ENCODE measurements at regions of chr17 and their contacts with region 1.

Region 1: GRCh38 chr17:1648963-1649843 is 463 bp downstream of the RILP start:
- DNase-seq: peak; percentile 96
- H3K4me3 ChIP-seq: peak overlapping the region; percentile 62 to 88 (median 77)
- H3K27ac ChIP-seq: peak overlapping the region; percentile 97 to 100 (median 100)
- H3K4me1 ChIP-seq: peaks cover 24 to 37% (median 33%) of the 10 kb centered on the region in 4 donors
- H3K27me3 ChIP-seq: no peaks in the 10 kb centered on the region
- CTCF ChIP-seq: peak in 3 of 5 experiments; percentile 83 to 97 (median 90)
- EP300 ChIP-seq: no peak
- POLR2A ChIP-seq: peak; percentile 83

Region 2: GRCh38 chr17:1573916-1574696 is 75.1 kb before region 1 on chr17:
- in situ Hi-C with region 1: no loop called
- intact Hi-C with region 1: loop called (anchors 5 kb)
- DNase-seq: peak; percentile 89
- H3K4me3 ChIP-seq: no peak overlapping the region
- H3K27ac ChIP-seq: peak overlapping the region; percentile 46 to 83 (median 80)
- H3K4me1 ChIP-seq: peaks cover 13 to 44% (median 26%) of the 10 kb centered on the region in 4 donors
- H3K27me3 ChIP-seq: no peaks in the 10 kb centered on the region
- CTCF ChIP-seq: peak; percentile 94 to 97 (median 96)
- EP300 ChIP-seq: no peak
- POLR2A ChIP-seq: no peak

Region 3: DNA sequence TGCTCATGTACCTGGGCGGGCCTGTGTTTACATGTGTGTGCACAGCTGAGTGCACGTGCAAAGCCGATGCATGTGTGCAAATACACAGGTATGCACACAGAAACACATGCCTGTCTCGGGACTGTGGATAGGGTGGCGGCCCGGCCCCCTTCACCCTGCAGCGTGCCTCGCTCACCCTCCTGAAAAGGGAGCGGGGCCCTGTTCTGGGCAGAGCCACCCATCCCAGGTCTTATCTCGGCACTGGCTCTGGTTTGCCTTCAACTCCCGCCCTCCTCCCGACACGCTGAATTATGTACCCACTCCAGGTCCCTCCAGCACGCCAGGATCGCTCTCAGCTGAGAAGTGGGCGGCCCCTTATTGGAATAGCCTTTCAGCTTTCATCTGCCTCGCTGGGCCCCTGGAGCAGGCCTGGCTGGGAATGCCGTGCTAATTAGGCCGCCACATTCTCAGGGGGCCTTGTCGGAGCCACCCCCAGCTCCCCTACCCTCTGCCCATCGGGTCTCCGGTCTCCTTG is 298.1 kb after region 1 on chr17:
- in situ Hi-C with region 1: no loop called
- intact Hi-C with region 1: no loop called
- DNase-seq: no peak
- H3K4me3 ChIP-seq: no peak overlapping the region
- H3K27ac ChIP-seq: no peak overlapping the region
- H3K4me1 ChIP-seq: no peaks in the 10 kb centered on the region
- H3K27me3 ChIP-seq: no peaks in the 10 kb centered on the region
- CTCF ChIP-seq: no peak
- EP300 ChIP-seq: no peak
- POLR2A ChIP-seq: no peak

Region 4: DNA sequence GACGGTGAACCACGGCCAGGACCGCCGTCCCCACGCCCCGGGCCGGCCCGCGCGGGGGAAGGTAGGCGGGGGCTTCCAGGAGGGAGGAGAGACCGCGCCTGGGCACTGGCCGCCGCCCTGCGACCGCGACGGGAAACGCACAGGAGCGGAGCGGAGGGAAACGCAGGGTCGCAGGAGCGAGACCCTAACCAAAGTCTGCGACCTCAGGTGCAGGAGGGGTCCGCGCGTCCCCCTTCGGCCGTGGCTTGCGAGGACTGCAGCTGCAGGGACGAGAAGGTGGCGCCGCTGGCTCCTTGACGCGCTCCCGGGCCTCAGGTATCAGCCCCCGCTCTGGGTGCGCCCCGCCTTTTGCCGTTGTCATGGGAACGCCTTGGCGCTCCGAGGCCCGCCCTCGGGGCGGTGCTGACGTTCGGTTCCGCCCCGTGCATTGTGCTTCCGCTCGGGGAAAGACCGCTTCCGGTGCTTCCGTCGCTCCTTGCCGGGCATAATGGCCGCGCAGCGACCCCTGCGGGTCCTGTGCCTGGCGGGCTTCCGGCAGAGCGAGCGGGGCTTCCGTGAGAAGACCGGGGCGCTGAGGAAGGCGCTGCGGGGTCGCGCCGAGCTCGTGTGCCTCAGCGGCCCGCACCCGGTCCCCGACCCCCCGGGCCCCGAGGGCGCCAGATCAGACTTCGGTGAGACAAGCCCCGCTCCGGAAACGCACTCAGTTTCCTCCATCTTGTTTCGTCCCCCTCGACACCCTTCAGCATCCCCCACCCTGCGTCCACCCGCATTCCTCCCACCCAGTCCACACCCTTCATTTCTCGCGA is 392.6 kb after region 1 on chr17 and contains the start of gene OVCA2:
- in situ Hi-C with region 1: loop called in 1 of 4 experiments (anchors 25 kb)
- intact Hi-C with region 1: no loop called
- DNase-seq: peak; percentile 96
- H3K4me3 ChIP-seq: peak within 1 kb of the TSS; percentile 56 to 91 (median 75)
- H3K27ac ChIP-seq: peak within 1 kb of the TSS; percentile 81 to 94 (median 91)
- H3K4me1 ChIP-seq: peaks cover 8 to 20% (median 15%) of the 10 kb centered on the region in 4 donors
- H3K27me3 ChIP-seq: no peaks in the 10 kb centered on the region
- CTCF ChIP-seq: peak; percentile 16 to 44 (median 36)
- EP300 ChIP-seq: no peak
- POLR2A ChIP-seq: peak; percentile 77
- total RNA-seq, gene OVCA2: 5.4 to 73.3 (median 36.9) TPM

Region 5: GRCh38 chr17:2337544-2338320 is 688.5 kb after region 1 on chr17:
- in situ Hi-C with region 1: no loop called
- intact Hi-C with region 1: no loop called
- DNase-seq: peak; percentile 76
- H3K4me3 ChIP-seq: peak overlapping the region; percentile 67 to 98 (median 81)
- H3K27ac ChIP-seq: peak overlapping the region; percentile 92 to 95 (median 94)
- H3K4me1 ChIP-seq: peaks cover 6 to 24% (median 17%) of the 10 kb centered on the region in 4 donors
- H3K27me3 ChIP-seq: no peaks in the 10 kb centered on the region
- CTCF ChIP-seq: peak in 1 of 5 experiments; percentile 9
- EP300 ChIP-seq: no peak
- POLR2A ChIP-seq: peak; percentile 32